ENCODE measurements at regions of chr3 and their contacts with region 1.

Region 1: DNA sequence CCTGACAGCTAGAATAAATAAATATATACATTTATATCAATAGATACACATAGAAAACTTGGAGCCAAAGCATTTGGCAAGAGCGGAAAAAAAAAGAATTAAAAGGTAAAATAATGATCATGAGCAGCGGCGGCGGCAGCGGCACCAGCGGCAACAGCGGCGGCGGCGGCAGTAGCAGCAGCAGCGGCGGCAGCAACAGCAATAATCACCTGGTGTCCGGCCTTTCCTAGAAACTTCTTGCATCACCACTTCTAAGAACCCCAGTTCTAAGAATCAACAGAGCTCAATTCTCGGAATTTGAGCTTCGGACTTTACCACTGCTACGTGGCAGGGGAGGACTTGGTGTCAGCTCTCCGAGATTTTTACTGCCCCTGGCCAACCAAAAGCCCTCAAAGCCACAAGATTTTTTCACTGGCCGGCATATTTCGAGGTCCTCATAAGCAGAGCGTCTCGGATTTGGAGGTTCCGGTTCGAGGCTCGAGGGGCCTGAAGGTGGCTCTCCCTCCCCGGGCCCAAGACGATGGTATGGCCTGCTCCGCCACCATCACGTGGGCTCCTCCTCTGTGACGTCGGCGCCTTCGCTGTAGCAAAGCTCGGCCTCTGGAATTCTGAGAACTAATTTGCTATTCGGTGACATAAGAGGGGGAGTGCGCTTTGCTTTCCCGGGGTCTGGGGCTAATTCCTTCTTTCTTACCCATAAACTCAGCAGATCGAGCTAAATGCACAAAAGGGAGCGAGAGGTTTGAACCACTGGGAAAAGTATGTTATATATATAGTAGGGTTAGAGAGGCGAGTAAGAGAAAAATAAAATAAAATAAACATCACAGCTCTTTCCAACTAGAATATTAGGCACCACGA is at the start of gene BCL6:
- H3K4me3 Mint-ChIP-seq: peak within 1 kb of the TSS; percentile 87
- H3K27ac Mint-ChIP-seq: peak within 1 kb of the TSS; percentile 100
- H3K4me1 Mint-ChIP-seq: peaks cover 49% of the 10 kb centered on the region
- H3K27me3 Mint-ChIP-seq: no peaks in the 10 kb centered on the region

Region 2: GRCh38 chr3:187662848-187663409 is 82.5 kb before region 1 on chr3:
- intact Hi-C with region 1: no loop called
- H3K4me3 Mint-ChIP-seq: no peak overlapping the region
- H3K27ac Mint-ChIP-seq: no peak overlapping the region
- H3K4me1 Mint-ChIP-seq: peaks cover 8% of the 10 kb centered on the region
- H3K27me3 Mint-ChIP-seq: peaks cover 7% of the 10 kb centered on the region

Region 3: GRCh38 chr3:187773233-187774184 is 28.1 kb after region 1 on chr3:
- intact Hi-C with region 1: loop called (anchors 2 kb)
- H3K4me3 Mint-ChIP-seq: peak overlapping the region; percentile 76
- H3K27ac Mint-ChIP-seq: peak overlapping the region; percentile 94
- H3K4me1 Mint-ChIP-seq: peaks cover 65% of the 10 kb centered on the region
- H3K27me3 Mint-ChIP-seq: no peaks in the 10 kb centered on the region

Region 4: GRCh38 chr3:187802928-187803259 is 57.5 kb after region 1 on chr3:
- intact Hi-C with region 1: no loop called
- H3K4me3 Mint-ChIP-seq: no peak overlapping the region
- H3K27ac Mint-ChIP-seq: no peak overlapping the region
- H3K4me1 Mint-ChIP-seq: peaks cover 17% of the 10 kb centered on the region
- H3K27me3 Mint-ChIP-seq: peaks cover 3% of the 10 kb centered on the region

Region 5: GRCh38 chr3:188021502-188022040 is 276.1 kb after region 1 on chr3:
- intact Hi-C with region 1: loop called (anchors 5 kb)
- H3K4me3 Mint-ChIP-seq: no peak overlapping the region
- H3K27ac Mint-ChIP-seq: peak overlapping the region; percentile 74
- H3K4me1 Mint-ChIP-seq: peaks cover 29% of the 10 kb centered on the region
- H3K27me3 Mint-ChIP-seq: peaks cover 2% of the 10 kb centered on the region

Region 6: DNA sequence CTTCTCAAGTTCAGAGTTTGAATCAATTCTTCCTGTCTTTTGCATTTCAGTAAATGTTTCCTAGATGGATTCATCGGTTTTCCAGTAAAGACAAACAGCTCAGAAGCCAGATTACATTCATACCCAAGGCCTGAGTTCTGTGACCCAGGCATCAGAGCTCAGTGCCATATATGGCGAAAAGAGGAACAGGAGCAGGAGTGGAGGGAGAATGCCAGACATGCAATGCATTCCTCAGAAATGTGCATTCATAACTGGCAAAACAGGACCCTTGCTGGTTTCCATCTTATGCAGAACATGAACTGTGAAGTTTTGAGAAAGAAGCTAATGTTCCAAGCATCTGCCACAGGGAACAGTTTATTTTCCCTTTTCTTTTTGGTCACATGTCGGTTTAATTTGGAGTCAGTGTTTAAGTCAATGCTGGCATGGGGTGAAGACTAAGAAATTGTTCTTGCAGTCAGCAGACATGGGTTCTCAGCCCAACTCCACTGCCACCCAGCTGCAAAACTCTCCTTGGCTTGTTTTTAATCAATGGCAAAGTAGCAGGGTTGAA is 525.1 kb after region 1 on chr3:
- intact Hi-C with region 1: loop called (anchors 2 kb)
- H3K4me3 Mint-ChIP-seq: peak overlapping the region; percentile 9
- H3K27ac Mint-ChIP-seq: peak overlapping the region; percentile 90
- H3K4me1 Mint-ChIP-seq: peaks cover 35% of the 10 kb centered on the region
- H3K27me3 Mint-ChIP-seq: no peaks in the 10 kb centered on the region

Region 7: GRCh38 chr3:188507244-188507720 is 761.9 kb after region 1 on chr3:
- intact Hi-C with region 1: loop called (anchors 10 kb)
- H3K4me3 Mint-ChIP-seq: no peak overlapping the region
- H3K27ac Mint-ChIP-seq: peak overlapping the region; percentile 2
- H3K4me1 Mint-ChIP-seq: peaks cover 45% of the 10 kb centered on the region
- H3K27me3 Mint-ChIP-seq: no peaks in the 10 kb centered on the region

Measured in dendritic cell treated with granulocyte-macrophage colony-stimulating factor and Interleukin-4, amounts not matched to agents 40 ng/mL and 50 ng/mL, for 4 days (primary cell).